CD4-positive, alpha-beta T cell (primary cell): ENCODE measurements at regions of chr12 and their contacts with region 1.

Region 1: GRCh38 chr12:89019408-89020120 is 332.7 kb downstream of the DUSP6 start:
- DNase-seq: peak; percentile 48 to 86 (median 58)
- ATAC-seq: peak; percentile 98
- H3K4me3 ChIP-seq: peak overlapping the region; percentile 24
- H3K4me3 Mint-ChIP-seq: no peak overlapping the region
- H3K27ac ChIP-seq: no peak overlapping the region
- H3K27ac Mint-ChIP-seq: no peak overlapping the region
- H3K4me1 ChIP-seq: peaks cover 5% of the 10 kb centered on the region
- H3K4me1 Mint-ChIP-seq: no peaks in the 10 kb centered on the region
- H3K27me3 ChIP-seq: no peaks in the 10 kb centered on the region
- H3K27me3 Mint-ChIP-seq: peaks cover 6% of the 10 kb centered on the region
- CTCF ChIP-seq: peak; percentile 90

Region 2: GRCh38 chr12:88111074-88111652 is 908.4 kb before region 1 on chr12:
- CTCF ChIA-PET with region 1: no interaction called
- POLR2A ChIA-PET with region 1: no interaction called
- intact Hi-C with region 1: loop called in 1 of 2 experiments (anchors 10 kb)
- DNase-seq: peak in 3 of 14 experiments; percentile 45 to 52 (median 46)
- ATAC-seq: no peak
- H3K4me3 ChIP-seq: no peak overlapping the region
- H3K4me3 Mint-ChIP-seq: no peak overlapping the region
- H3K27ac ChIP-seq: no peak overlapping the region
- H3K27ac Mint-ChIP-seq: no peak overlapping the region
- H3K4me1 ChIP-seq: no peaks in the 10 kb centered on the region
- H3K4me1 Mint-ChIP-seq: no peaks in the 10 kb centered on the region
- H3K27me3 ChIP-seq: no peaks in the 10 kb centered on the region
- H3K27me3 Mint-ChIP-seq: no peaks in the 10 kb centered on the region
- CTCF ChIP-seq: peak; percentile 44

Region 3: GRCh38 chr12:89051065-89051677 is 31.6 kb after region 1 on chr12:
- CTCF ChIA-PET with region 1: no interaction called
- POLR2A ChIA-PET with region 1: no interaction called
- intact Hi-C with region 1: loop called in 1 of 2 experiments (anchors 2 kb)
- DNase-seq: peak in 6 of 14 experiments; percentile 1 to 74 (median 42)
- ATAC-seq: peak; percentile 61
- H3K4me3 ChIP-seq: no peak overlapping the region
- H3K4me3 Mint-ChIP-seq: no peak overlapping the region
- H3K27ac ChIP-seq: no peak overlapping the region
- H3K27ac Mint-ChIP-seq: no peak overlapping the region
- H3K4me1 ChIP-seq: no peaks in the 10 kb centered on the region
- H3K4me1 Mint-ChIP-seq: no peaks in the 10 kb centered on the region
- H3K27me3 ChIP-seq: no peaks in the 10 kb centered on the region
- H3K27me3 Mint-ChIP-seq: no peaks in the 10 kb centered on the region
- CTCF ChIP-seq: peak; percentile 88

Region 4: GRCh38 chr12:89461649-89462612 is 442.4 kb after region 1 on chr12:
- CTCF ChIA-PET with region 1: interaction called, 9 read pairs
- POLR2A ChIA-PET with region 1: no interaction called
- intact Hi-C with region 1: loop called (anchors 1 kb)
- DNase-seq: peak in 3 of 14 experiments; percentile 68 to 78 (median 69)
- ATAC-seq: peak; percentile 88
- H3K4me3 ChIP-seq: no peak overlapping the region
- H3K4me3 Mint-ChIP-seq: peak overlapping the region; percentile 40
- H3K27ac ChIP-seq: no peak overlapping the region
- H3K27ac Mint-ChIP-seq: no peak overlapping the region
- H3K4me1 ChIP-seq: no peaks in the 10 kb centered on the region
- H3K4me1 Mint-ChIP-seq: peaks cover 16% of the 10 kb centered on the region
- H3K27me3 ChIP-seq: no peaks in the 10 kb centered on the region
- H3K27me3 Mint-ChIP-seq: no peaks in the 10 kb centered on the region
- CTCF ChIP-seq: peak; percentile 81

Region 5: DNA sequence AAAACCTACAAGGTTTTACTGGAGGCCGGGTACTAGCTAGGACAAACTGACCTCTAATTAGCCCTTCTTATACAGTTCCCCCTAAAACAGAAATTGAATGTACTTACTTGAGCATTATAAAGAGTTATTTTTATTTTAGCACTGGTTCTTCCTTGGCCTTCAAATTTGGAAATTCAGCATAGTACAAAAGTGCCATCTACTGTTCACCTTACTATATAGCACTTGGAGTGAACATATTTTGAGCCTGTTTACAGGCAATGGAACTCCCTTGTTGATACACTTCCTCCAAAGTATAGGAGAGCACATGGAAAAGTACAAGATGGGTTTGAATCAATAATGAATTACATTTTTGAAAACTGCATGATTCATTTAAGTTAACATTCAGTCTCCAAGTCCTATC is 510.2 kb after region 1 on chr12:
- CTCF ChIA-PET with region 1: interaction called, 13 read pairs
- POLR2A ChIA-PET with region 1: interaction called, 3 read pairs
- intact Hi-C with region 1: loop called (anchors 1 kb)
- DNase-seq: peak in 3 of 14 experiments; percentile 69 to 73 (median 72)
- ATAC-seq: peak; percentile 37
- H3K4me3 ChIP-seq: no peak overlapping the region
- H3K4me3 Mint-ChIP-seq: peak overlapping the region; percentile 58
- H3K27ac ChIP-seq: no peak overlapping the region
- H3K27ac Mint-ChIP-seq: peak overlapping the region; percentile 4
- H3K4me1 ChIP-seq: peaks cover 2% of the 10 kb centered on the region
- H3K4me1 Mint-ChIP-seq: peaks cover 19% of the 10 kb centered on the region
- H3K27me3 ChIP-seq: no peaks in the 10 kb centered on the region
- H3K27me3 Mint-ChIP-seq: no peaks in the 10 kb centered on the region
- CTCF ChIP-seq: peak; percentile 81

Region 6: GRCh38 chr12:90102957-90103652 is 1083.5 kb after region 1 on chr12:
- CTCF ChIA-PET with region 1: no interaction called
- POLR2A ChIA-PET with region 1: no interaction called
- intact Hi-C with region 1: loop called in 1 of 2 experiments (anchors 10 kb)
- DNase-seq: peak in 4 of 14 experiments; percentile 22 to 68 (median 62)
- ATAC-seq: peak; percentile 82
- H3K4me3 ChIP-seq: peak overlapping the region; percentile 13
- H3K4me3 Mint-ChIP-seq: peak overlapping the region; percentile 56
- H3K27ac ChIP-seq: no peak overlapping the region
- H3K27ac Mint-ChIP-seq: no peak overlapping the region
- H3K4me1 ChIP-seq: no peaks in the 10 kb centered on the region
- H3K4me1 Mint-ChIP-seq: peaks cover 17% of the 10 kb centered on the region
- H3K27me3 ChIP-seq: no peaks in the 10 kb centered on the region
- H3K27me3 Mint-ChIP-seq: no peaks in the 10 kb centered on the region
- CTCF ChIP-seq: peak; percentile 76